Posterior vena cava (tissue), 2 donors: ENCODE measurements at regions of chr1 and their contacts with region 1.

Region 1: DNA sequence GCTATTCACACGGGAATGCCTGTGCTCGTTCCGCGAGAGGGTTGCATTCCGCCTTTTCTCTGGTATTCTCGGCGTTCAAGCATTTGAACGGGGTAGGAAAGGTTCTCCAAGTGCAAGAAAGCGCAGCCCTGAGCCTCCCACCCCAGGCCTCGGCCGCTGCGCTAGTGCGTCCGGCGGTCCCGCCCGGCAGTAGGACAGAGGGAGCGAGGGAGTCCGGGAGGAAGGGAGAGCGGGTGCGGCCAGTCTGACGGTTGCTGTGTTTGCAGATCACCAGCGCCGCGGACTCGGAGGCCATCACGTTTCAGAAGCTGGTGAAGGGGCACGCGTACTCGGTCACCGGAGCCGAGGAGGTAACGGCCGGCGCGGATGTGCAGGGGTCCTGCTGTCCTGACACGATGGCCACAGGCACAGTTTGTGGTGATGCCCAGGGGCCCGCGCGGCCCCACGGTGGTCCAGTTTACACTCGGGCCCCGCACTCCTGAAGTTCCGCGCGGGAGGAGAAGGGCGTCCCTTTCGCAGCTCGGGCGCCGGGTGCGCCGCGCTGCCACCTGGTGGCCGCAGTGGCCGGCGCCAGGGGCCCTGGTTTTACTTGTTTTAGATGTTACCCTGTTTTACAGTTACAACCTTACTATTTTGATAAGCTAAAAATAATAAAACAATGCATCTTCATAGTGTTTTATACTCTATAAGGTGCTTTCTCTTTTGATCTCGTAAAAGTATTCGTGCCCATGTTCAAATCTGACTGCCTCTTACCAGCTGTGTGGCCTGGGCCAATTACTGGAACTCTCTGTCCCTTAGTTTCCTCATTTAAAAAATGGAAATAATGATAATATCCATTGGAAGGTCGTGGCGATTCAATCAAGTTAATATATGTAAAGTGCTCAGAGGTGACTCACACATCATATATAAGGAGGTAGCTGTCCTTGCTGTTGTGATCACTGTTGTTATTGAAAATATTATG is 36.7 kb downstream of the CAPN2 start:
- DNase-seq: peak; percentile 92

Region 2: DNA sequence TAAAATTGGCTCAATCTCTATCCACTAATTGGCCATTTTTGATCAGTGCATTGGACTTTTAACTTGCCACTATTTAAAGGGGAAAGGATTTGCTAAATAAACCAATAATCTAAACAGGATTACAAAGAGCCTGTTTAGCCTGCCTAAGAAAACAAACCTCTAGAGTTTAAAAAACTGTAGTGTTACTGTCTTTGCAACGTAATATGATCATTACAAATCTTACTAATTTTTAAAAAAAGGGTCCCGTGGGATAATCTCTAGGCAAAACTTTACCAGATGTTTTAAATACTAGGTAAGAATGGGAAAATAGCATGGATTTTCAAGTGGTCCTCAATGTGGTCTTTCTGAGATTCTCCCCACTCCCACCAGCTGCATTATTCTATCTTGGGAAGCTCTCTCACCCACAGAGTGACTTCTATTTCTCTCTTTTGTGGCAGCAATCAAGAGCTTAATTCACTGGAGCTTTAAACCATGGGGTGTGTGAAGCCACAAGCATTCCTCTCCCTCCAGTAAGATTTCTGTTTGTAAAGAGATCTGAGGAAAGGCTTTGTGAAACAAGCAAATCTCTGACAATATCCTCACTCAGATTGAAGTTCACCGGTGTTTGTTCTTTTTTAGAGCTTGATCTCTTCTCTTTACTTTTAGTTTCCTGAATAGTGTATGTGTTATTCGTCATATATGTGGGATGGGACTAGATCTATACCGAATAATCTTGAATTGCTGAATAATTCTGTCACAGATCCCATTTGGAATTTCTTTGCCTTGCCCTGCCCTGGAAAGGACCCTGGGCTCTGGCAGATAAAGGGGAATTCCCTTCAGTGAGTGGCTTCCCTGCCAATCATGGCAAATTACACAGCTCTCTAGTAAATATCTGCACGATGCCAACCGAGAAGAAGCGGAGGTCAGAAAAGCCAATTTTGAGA is 738.2 kb before region 1 on chr1:
- intact Hi-C with region 1: no loop called
- DNase-seq: no peak

Region 3: GRCh38 chr1:223695941-223696340 is 53.1 kb before region 1 on chr1:
- intact Hi-C with region 1: loop called (anchors 2 to 5 kb)
- DNase-seq: no peak

Region 4: DNA sequence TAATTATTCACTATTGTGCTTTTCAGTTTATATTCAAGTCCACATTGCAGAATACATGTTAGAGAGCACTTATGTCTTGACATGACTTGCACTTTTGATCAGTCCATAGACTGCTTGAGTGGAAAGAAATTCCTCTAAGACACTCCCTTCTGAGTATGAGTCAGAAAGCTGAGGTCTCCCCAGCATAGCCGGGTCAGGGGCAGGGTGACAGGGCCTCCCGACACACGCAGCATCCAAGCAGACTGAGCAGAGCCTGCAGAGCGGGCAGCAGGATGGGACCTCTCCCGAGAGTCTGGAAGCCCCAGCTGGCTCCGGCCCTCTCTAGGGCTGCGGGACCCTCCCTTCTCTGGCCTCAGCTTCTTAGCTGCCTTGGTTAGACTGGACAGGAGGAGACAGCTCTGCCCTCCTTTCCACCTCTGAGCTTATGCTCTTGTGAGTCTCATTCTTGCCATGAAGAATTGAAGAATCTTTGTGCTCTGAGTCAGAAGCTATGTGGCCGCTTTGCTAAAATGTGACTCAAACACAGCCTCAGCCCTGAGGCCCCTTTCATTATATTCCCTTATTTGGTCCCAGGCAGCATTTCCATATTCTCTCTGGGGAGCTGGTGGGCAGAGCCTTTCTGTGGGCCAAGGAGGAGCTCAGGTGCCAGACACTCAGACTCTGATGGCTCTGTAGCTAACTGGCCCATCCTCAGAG is 48.0 kb before region 1 on chr1:
- intact Hi-C with region 1: loop called (anchors 2 to 5 kb)
- DNase-seq: peak; percentile 89

Region 5: DNA sequence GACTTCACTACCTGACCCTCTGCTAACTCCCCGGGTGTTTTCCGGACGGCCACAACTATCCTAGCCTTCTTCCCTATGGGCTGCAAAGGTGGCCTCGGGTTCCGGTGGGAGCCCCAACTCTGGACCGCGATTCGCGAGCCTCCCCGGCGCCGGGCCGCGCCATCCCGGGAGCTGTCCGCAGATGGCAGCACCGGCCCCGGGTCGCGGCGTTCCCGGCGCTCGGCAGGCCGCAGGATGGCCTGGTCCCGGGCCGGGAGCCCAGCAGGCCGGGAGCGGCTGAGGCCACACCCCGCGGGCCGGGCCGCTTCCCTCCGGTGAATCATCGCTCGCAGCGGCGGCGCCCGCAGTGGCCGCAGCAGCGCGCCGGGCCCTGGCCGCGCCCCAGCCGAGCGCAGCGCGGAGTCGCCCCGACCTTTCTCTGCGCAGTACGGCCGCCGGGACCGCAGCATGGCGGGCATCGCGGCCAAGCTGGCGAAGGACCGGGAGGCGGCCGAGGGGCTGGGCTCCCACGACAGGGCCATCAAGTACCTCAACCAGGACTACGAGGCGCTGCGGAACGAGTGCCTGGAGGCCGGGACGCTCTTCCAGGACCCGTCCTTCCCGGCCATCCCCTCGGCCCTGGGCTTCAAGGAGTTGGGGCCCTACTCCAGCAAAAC is 36.7 kb before region 1 on chr1 and contains the start of gene CAPN2:
- intact Hi-C with region 1: loop called in 1 of 2 experiments (anchors 5 kb)
- DNase-seq: peak; percentile 96
- total RNA-seq, gene CAPN2: 234 to 289 TPM